ENCODE measurements at regions of chr1 and their contacts with region 1.

Region 1: GRCh38 chr1:213512316-213512715 is 461.3 kb downstream of the RPS6KC1 start:
- DNase-seq: no peak
- ATAC-seq: no peak
- H3K4me3 Mint-ChIP-seq: no peak overlapping the region
- H3K27ac Mint-ChIP-seq: no peak overlapping the region
- H3K4me1 Mint-ChIP-seq: no peaks in the 10 kb centered on the region
- H3K27me3 Mint-ChIP-seq: no peaks in the 10 kb centered on the region

Region 2: DNA sequence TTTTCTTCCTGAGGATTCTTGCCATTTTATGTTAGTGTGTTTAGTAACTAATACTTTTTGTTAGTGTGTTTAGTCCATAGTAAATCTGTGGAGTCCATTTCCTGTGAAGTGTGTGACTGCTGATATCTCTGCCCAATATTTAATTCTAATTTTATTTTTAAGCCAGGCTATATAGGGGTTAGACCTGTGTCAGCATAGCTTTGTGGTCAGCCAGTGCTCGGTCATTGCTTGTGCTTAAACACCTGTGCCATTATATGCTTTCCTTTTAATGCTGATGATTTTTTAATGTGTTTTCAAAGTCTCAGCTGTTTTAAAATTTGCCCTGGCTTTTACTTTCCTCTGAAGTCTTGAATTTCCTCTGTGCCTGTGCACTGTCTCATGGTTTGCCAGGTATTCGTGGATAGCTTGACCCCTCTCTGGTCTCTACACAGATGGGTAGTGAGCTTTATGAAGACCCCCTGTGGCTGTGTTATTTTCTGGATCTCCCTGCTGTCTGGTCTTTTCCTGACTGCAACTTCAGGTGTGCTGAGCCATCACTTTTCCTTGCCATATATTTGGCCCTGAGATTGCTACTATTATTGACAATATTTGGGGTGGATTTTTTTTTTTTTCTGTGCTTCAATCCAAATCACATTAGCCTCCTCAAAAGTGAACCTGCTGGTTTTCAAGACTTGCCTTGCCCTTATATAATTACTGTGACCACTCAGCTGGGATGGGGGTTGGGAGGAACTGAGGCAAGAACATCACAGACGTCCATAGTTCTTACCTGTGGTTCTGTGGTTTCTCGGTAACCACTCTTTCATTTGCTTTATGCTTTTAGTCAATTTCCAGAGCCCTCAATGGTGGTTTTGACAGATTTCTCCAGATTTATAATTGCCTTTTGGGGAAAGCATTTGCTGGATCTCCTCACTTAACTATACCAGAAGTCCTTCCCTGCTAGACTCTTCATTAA is 401.7 kb before region 1 on chr1:
- CTCF ChIA-PET with region 1: no interaction called
- POLR2A ChIA-PET with region 1: no interaction called
- intact Hi-C with region 1: no loop called
- DNase-seq: peak; percentile 13
- ATAC-seq: no peak
- H3K4me3 Mint-ChIP-seq: no peak overlapping the region
- H3K27ac Mint-ChIP-seq: no peak overlapping the region
- H3K4me1 Mint-ChIP-seq: peaks cover 10% of the 10 kb centered on the region
- H3K27me3 Mint-ChIP-seq: no peaks in the 10 kb centered on the region

Region 3: GRCh38 chr1:213466541-213466940 is 45.8 kb before region 1 on chr1:
- CTCF ChIA-PET with region 1: no interaction called
- POLR2A ChIA-PET with region 1: no interaction called
- intact Hi-C with region 1: loop called in 1 of 2 experiments (anchors 2 kb)
- DNase-seq: no peak
- ATAC-seq: no peak
- H3K4me3 Mint-ChIP-seq: no peak overlapping the region
- H3K27ac Mint-ChIP-seq: no peak overlapping the region
- H3K4me1 Mint-ChIP-seq: no peaks in the 10 kb centered on the region
- H3K27me3 Mint-ChIP-seq: peaks cover 5% of the 10 kb centered on the region

Region 4: GRCh38 chr1:213669964-213670691 is 157.8 kb after region 1 on chr1:
- CTCF ChIA-PET with region 1: no interaction called
- POLR2A ChIA-PET with region 1: no interaction called
- intact Hi-C with region 1: no loop called
- DNase-seq: peak; percentile 18
- ATAC-seq: peak; percentile 75
- H3K4me3 Mint-ChIP-seq: no peak overlapping the region
- H3K27ac Mint-ChIP-seq: no peak overlapping the region
- H3K4me1 Mint-ChIP-seq: peaks cover 19% of the 10 kb centered on the region
- H3K27me3 Mint-ChIP-seq: no peaks in the 10 kb centered on the region

Measured in activated CD4-positive, alpha-beta T cell treated with anti-CD3 and anti-CD28 coated beads for 36 hours (primary cell).